ENCODE measurements at regions of chr17 and their contacts with region 1.

Region 1: DNA sequence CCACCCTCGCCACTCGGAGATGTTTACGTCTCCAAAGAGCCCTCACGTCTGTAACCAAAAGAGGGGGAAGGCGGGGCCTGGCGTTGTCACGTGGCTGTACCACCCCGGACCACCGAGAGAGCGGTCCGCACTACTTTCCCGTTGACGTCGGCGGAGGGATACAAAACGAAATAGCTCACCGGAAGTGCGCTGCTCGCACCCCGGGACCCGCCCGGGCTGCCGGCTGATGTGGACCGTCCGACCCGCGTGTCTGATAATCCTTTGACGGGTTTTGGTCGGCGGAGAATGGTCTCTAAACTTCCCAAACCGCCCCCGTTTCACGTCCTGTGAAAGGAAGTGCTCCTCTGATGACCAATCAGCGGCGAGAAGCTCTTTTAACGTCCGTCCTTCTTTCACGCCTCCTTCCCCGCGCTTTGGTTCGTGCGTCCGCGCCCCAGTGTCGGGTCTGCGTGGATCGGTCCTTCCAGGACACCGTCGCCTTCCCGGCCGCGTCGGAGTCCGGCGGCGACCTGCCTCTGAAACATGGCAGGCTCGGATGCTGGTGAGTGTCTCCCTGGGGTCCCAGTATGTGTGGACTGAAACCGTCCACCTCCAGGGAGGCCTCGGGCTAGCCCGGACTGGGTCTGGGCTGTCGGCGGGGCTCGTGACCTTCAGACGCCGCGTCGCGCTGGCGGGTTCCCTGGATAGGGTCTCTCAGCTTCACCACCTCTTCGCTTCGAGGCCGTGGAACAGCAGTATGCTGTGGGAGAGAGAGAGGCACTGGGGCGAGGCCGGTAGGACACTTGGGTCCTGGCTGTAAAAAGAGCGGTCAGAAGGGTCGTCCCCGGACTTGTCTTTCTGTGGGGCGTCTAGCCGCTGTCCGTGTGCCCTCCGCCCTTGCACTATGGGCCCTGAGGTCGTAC is at the start of gene CEP95:
- DNase-seq: peak; percentile 89 to 98 (median 94)
- ATAC-seq: peak; percentile 44
- H3K4me3 ChIP-seq: peak within 1 kb of the TSS; percentile 90
- H3K4me3 Mint-ChIP-seq: peak within 1 kb of the TSS; percentile 99
- H3K27ac ChIP-seq: peak within 1 kb of the TSS; percentile 99 to 100
- H3K27ac Mint-ChIP-seq: peak within 1 kb of the TSS; percentile 99
- H3K4me1 ChIP-seq: peaks cover 28% of the 10 kb centered on the region
- H3K4me1 Mint-ChIP-seq: peaks cover 61% of the 10 kb centered on the region
- H3K27me3 ChIP-seq: no peaks in the 10 kb centered on the region
- H3K27me3 Mint-ChIP-seq: no peaks in the 10 kb centered on the region
- CTCF ChIP-seq: no peak
- total RNA-seq, gene CEP95: 256 to 269 TPM

Region 2: DNA sequence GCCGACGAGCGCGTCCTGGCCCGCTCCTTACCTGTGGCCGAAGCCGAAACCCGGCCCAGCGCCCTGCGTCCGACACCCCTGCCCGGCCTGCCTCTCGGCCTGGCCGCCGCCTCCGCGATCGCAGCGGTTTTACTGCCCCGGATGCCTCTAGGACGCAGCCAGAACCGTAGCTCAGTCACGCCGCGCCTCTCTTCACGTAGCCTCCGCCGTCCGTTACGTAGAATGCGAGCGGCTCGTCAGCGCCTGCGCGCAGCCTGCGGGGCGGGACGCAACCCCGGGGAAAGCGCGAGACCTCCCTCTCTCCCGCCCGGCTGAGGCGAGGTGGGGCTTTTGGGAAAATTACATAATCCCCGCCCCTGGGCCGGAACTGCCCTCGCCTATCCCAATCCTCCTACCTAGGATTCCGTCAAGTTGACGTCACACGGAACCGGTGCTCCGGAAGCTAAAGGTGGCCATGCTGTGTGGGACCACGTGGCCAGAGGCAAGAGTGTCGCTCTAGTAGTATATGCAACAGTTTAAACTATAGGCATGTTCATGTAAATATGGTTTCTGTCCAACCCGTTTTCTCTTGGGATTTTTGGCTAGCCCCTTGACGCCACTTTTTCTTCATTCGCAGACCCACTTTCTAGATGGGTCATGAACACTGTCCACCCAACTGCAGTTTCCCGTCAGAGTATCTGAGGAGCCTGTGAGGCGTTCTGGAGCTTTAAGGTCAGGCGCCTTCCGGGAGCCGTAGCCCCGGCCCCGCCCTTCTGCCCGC is 733.3 kb before region 1 on chr17 and contains the start of gene CCDC47:
- CTCF ChIA-PET with region 1: no interaction called
- POLR2A ChIA-PET with region 1: interaction called, 41 read pairs
- intact Hi-C with region 1: no loop called
- DNase-seq: peak; percentile 94 to 100 (median 98)
- ATAC-seq: peak; percentile 80
- H3K4me3 ChIP-seq: peak within 1 kb of the TSS; percentile 67
- H3K4me3 Mint-ChIP-seq: peak within 1 kb of the TSS; percentile 99
- H3K27ac ChIP-seq: peak within 1 kb of the TSS; percentile 94 to 98
- H3K27ac Mint-ChIP-seq: peak within 1 kb of the TSS; percentile 97
- H3K4me1 ChIP-seq: peaks cover 58% of the 10 kb centered on the region
- H3K4me1 Mint-ChIP-seq: peaks cover 71% of the 10 kb centered on the region
- H3K27me3 ChIP-seq: no peaks in the 10 kb centered on the region
- H3K27me3 Mint-ChIP-seq: no peaks in the 10 kb centered on the region
- CTCF ChIP-seq: no peak
- total RNA-seq, gene CCDC47: 31.0 to 31.3 TPM

Region 3: DNA sequence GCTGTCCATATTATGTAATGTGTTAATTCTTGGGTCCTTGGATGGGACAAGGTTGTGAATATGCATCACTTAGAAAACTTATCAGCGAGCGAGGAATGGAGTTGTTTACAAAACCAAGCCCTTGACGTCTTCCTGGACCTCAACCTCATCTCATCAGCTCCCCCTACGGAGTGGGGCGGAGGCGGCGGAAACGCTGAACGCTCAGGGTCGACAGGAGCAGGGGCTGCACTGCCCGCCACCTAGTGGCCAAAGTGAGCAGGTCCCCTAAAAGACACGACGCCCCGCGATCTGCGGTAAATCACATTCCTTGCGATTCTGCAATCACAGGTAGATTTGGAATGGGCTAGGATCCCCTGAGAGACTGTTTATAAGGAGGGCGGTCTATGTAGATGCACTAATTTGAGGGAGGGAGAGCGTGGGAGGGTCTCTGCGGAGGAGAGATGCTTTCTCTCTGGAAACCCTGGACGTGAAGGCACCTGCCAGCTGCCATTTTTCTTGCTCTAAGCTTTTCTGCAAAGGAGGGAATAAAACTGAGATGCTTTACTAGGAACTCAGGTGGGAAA is 481.0 kb before region 1 on chr17:
- CTCF ChIA-PET with region 1: no interaction called
- POLR2A ChIA-PET with region 1: interaction called, 50 read pairs
- intact Hi-C with region 1: loop called in 1 of 2 experiments (anchors 10 kb)
- DNase-seq: peak; percentile 89 to 98 (median 93)
- ATAC-seq: peak; percentile 84
- H3K4me3 ChIP-seq: peak overlapping the region; percentile 46
- H3K4me3 Mint-ChIP-seq: peak overlapping the region; percentile 68
- H3K27ac ChIP-seq: peak overlapping the region; percentile 74 to 91
- H3K27ac Mint-ChIP-seq: peak overlapping the region; percentile 100
- H3K4me1 ChIP-seq: peaks cover 78% of the 10 kb centered on the region
- H3K4me1 Mint-ChIP-seq: peaks cover 59% of the 10 kb centered on the region
- H3K27me3 ChIP-seq: no peaks in the 10 kb centered on the region
- H3K27me3 Mint-ChIP-seq: no peaks in the 10 kb centered on the region
- CTCF ChIP-seq: peak; percentile 99

Region 4: GRCh38 chr17:64345696-64346376 is 161.0 kb before region 1 on chr17:
- CTCF ChIA-PET with region 1: no interaction called
- POLR2A ChIA-PET with region 1: interaction called, 36 read pairs
- intact Hi-C with region 1: no loop called
- DNase-seq: no peak
- ATAC-seq: no peak
- H3K4me3 ChIP-seq: no peak overlapping the region
- H3K4me3 Mint-ChIP-seq: no peak overlapping the region
- H3K27ac ChIP-seq: no peak overlapping the region
- H3K27ac Mint-ChIP-seq: peak overlapping the region; percentile 49
- H3K4me1 ChIP-seq: peaks cover 63% of the 10 kb centered on the region
- H3K4me1 Mint-ChIP-seq: peaks cover 48% of the 10 kb centered on the region
- H3K27me3 ChIP-seq: no peaks in the 10 kb centered on the region
- H3K27me3 Mint-ChIP-seq: no peaks in the 10 kb centered on the region
- CTCF ChIP-seq: no peak

Region 5: GRCh38 chr17:64441772-64442540 is 64.9 kb before region 1 on chr17:
- CTCF ChIA-PET with region 1: no interaction called
- POLR2A ChIA-PET with region 1: interaction called, 12 read pairs
- intact Hi-C with region 1: no loop called
- DNase-seq: peak in 10 of 14 experiments; percentile 5 to 74 (median 16)
- ATAC-seq: peak; percentile 82
- H3K4me3 ChIP-seq: peak overlapping the region; percentile 32
- H3K4me3 Mint-ChIP-seq: peak overlapping the region; percentile 69
- H3K27ac ChIP-seq: peak overlapping the region; percentile 18 to 53
- H3K27ac Mint-ChIP-seq: peak overlapping the region; percentile 79
- H3K4me1 ChIP-seq: peaks cover 23% of the 10 kb centered on the region
- H3K4me1 Mint-ChIP-seq: peaks cover 33% of the 10 kb centered on the region
- H3K27me3 ChIP-seq: no peaks in the 10 kb centered on the region
- H3K27me3 Mint-ChIP-seq: no peaks in the 10 kb centered on the region
- CTCF ChIP-seq: no peak

Region 6: DNA sequence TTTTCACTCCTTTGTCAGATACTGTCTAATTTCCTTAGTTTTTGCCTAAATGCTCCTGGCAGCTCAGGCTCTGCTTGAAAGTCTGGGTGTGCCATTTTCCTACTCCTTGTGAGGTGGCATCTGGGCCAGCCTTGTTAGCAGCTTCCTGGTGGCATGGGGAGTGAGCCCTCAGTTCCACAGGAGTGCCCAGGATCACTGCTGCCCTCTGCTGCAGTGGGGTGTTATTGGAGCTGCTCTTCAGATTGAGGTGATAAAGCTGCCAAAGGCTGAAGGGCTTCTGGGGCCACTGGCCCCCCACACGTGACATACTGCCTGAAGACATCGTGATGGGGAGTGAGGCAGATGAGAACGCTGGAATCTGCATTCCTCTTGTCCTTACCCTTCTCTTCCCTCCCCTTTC is 27.3 kb after region 1 on chr17:
- CTCF ChIA-PET with region 1: no interaction called
- POLR2A ChIA-PET with region 1: interaction called, 11 read pairs
- intact Hi-C with region 1: no loop called
- DNase-seq: peak in 3 of 14 experiments; percentile 7 to 33 (median 13)
- ATAC-seq: no peak
- H3K4me3 ChIP-seq: no peak overlapping the region
- H3K4me3 Mint-ChIP-seq: no peak overlapping the region
- H3K27ac ChIP-seq: no peak overlapping the region
- H3K27ac Mint-ChIP-seq: peak overlapping the region; percentile 20
- H3K4me1 ChIP-seq: no peaks in the 10 kb centered on the region
- H3K4me1 Mint-ChIP-seq: no peaks in the 10 kb centered on the region
- H3K27me3 ChIP-seq: no peaks in the 10 kb centered on the region
- H3K27me3 Mint-ChIP-seq: no peaks in the 10 kb centered on the region
- CTCF ChIP-seq: no peak

Region 7: GRCh38 chr17:64661976-64662773 is 155.3 kb after region 1 on chr17 and contains the start of gene SMURF2:
- CTCF ChIA-PET with region 1: no interaction called
- POLR2A ChIA-PET with region 1: interaction called, 43 read pairs
- intact Hi-C with region 1: loop called in 1 of 2 experiments (anchors 2 kb)
- DNase-seq: peak; percentile 59 to 88 (median 76)
- ATAC-seq: peak; percentile 80
- H3K4me3 ChIP-seq: peak within 1 kb of the TSS; percentile 87
- H3K4me3 Mint-ChIP-seq: peak within 1 kb of the TSS; percentile 98
- H3K27ac ChIP-seq: peak within 1 kb of the TSS; percentile 13 to 20
- H3K27ac Mint-ChIP-seq: peak within 1 kb of the TSS; percentile 95
- H3K4me1 ChIP-seq: peaks cover 22% of the 10 kb centered on the region
- H3K4me1 Mint-ChIP-seq: peaks cover 47% of the 10 kb centered on the region
- H3K27me3 ChIP-seq: no peaks in the 10 kb centered on the region
- H3K27me3 Mint-ChIP-seq: no peaks in the 10 kb centered on the region
- CTCF ChIP-seq: no peak
- total RNA-seq, gene SMURF2: 28.0 to 29.7 TPM

Measured in CD4-positive, alpha-beta T cell (primary cell).